Astrocyte of the cerebellum (primary cell): ENCODE measurements at regions of chr3 and their contacts with region 1.

Region 1: DNA sequence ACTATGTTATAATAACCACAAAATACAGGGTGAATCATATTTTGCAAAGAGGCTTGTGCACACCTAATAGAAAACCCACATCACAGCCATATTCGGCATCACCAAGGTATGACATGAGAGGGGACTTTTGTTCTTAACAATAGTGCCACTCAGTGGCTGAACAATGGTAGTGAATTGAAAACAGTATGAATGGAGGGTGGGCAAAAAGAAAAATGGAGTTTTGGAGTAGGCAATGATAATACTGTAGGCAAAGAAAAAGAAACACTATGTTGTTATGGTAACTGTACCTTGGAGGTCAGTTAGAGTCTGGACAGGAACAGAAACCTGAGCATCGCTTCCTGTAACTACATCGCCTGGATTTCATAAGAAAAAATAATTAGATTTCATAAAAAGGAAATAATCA is 348.6 kb downstream of the PLCL2 start:
- DNase-seq: peak; percentile 51
- H3K4me3 ChIP-seq: no peak overlapping the region
- CTCF ChIP-seq: peak; percentile 63

Region 2: DNA sequence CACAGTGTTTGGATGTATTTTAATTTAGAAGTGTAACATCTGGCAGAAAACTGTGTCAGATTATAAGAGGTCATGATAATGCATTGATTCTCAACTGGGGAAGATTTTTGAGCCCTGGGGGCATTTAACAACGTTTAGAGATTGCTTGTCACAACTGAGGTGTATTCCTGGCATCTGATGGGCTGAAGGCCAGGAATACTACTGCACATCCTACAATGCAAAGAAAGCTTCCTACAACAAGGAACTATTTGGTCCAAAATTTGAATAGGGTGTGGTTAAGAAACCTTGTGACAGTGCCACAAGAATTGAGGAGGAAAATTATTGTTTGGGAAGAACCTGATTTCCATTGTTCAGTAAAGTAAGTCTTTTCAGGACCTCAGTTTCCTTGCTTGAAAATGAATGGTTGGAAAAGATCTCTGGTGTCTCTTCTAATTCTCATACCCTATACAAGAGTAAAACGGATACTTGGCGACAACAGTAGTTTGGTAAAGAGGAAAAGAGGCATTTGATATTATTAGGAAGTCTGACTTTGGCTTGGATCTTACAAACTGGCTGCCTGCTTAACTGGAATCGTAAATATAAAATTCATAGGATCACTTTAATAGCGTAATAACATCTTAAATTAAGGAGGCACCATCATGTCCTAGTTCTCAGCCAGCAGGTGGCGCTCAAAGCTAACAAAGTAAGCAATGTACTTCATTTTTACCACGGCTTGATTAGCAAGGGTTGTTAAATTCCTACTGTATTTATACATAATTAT is 632.4 kb before region 1 on chr3:
- in situ Hi-C with region 1: loop called (anchors 5 kb)
- DNase-seq: peak; percentile 83
- H3K4me3 ChIP-seq: no peak overlapping the region
- CTCF ChIP-seq: peak; percentile 69

Region 3: GRCh38 chr3:17103579-17103978 is 129.8 kb before region 1 on chr3:
- in situ Hi-C with region 1: no loop called
- DNase-seq: no peak
- H3K4me3 ChIP-seq: no peak overlapping the region
- CTCF ChIP-seq: no peak